Activated naive CD4-positive, alpha-beta T cell treated with anti-CD3 and anti-CD28 coated beads for 36 hours (primary cell): ENCODE measurements at regions of chr10 and their contacts with region 1.

Region 1: DNA sequence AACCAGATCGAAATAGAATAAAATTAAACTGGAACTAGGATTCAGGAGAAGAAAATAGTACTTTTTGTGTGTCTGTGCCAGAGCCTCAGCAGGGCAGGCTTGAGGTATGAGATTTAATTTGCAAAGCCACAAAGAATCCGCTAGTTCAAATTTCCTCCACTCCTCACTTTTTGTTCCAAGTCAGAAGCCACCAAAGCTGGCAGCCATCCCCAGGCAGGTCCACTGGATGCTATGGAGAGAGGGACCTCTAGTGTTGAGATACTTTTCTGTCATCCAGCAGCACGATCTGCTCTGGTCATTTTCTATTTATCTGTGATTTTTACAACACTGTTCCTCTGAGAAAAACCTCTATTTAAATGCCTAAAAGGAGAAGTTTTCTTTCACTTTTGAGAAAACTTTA is 147.9 kb upstream of the FRMD4A start:
- DNase-seq: peak; percentile 57
- H3K4me3 Mint-ChIP-seq: no peak overlapping the region
- H3K27ac Mint-ChIP-seq: no peak overlapping the region
- H3K4me1 Mint-ChIP-seq: peaks cover 2% of the 10 kb centered on the region
- H3K27me3 Mint-ChIP-seq: peaks cover 5% of the 10 kb centered on the region

Region 2: GRCh38 chr10:13776861-13777311 is 701.7 kb before region 1 on chr10:
- CTCF ChIA-PET with region 1: no interaction called
- intact Hi-C with region 1: no loop called
- DNase-seq: no peak
- H3K4me3 Mint-ChIP-seq: no peak overlapping the region
- H3K27ac Mint-ChIP-seq: no peak overlapping the region
- H3K4me1 Mint-ChIP-seq: no peaks in the 10 kb centered on the region
- H3K27me3 Mint-ChIP-seq: no peaks in the 10 kb centered on the region

Region 3: GRCh38 chr10:14200698-14201544 is 277.7 kb before region 1 on chr10:
- CTCF ChIA-PET with region 1: interaction called, 17 read pairs
- intact Hi-C with region 1: loop called (anchors 1 kb)
- DNase-seq: peak; percentile 29
- H3K4me3 Mint-ChIP-seq: no peak overlapping the region
- H3K27ac Mint-ChIP-seq: no peak overlapping the region
- H3K4me1 Mint-ChIP-seq: no peaks in the 10 kb centered on the region
- H3K27me3 Mint-ChIP-seq: peaks cover 6% of the 10 kb centered on the region

Region 4: GRCh38 chr10:14302035-14302434 is 176.6 kb before region 1 on chr10:
- CTCF ChIA-PET with region 1: no interaction called
- intact Hi-C with region 1: loop called (anchors 10 kb)
- DNase-seq: no peak
- H3K4me3 Mint-ChIP-seq: no peak overlapping the region
- H3K27ac Mint-ChIP-seq: no peak overlapping the region
- H3K4me1 Mint-ChIP-seq: no peaks in the 10 kb centered on the region
- H3K27me3 Mint-ChIP-seq: peaks cover 6% of the 10 kb centered on the region